ENCODE measurements at regions of chr9 and their contacts with region 1.

Region 1: DNA sequence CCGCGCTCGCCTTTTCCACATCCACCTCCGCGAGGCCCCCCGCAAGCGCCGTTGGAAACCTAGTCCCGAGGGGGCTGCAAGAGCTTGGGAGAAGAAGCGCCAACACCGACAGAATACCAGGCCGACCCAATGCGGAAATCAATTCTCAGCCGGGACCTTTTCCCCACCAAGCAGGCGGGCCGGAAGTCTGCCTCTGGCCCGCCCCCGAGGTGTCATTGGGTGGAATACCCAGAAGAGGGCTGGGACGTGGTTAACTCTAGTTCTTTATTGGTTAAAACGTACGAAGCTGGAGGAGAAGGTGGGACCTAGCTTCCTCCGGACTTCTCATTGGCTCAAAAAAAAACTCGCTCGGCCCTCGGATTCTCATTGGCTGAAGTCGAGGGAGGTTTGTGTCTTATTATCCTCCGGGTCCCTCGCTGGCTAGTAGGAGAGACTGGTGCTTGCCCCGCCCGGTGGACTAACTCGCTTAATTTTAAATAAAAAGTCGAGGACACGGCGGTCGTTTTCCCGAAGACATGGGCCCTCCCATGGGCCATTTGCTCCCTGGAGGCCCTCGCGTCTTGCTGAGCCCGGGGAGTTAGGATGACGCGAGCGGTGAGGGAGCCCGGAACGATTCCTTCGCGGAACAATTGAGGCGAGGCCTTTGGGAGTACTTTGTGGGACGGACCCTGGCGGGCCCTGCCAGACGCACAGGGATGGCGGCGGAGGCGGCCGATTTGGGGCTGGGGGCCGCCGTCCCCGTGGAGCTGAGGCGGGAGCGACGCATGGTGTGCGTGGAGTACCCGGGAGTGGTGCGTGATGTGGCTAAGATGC is at the start of gene GTF3C5:
- DNase-seq: peak; percentile 96
- total RNA-seq, gene GTF3C5: 27.6 TPM

Region 2: DNA sequence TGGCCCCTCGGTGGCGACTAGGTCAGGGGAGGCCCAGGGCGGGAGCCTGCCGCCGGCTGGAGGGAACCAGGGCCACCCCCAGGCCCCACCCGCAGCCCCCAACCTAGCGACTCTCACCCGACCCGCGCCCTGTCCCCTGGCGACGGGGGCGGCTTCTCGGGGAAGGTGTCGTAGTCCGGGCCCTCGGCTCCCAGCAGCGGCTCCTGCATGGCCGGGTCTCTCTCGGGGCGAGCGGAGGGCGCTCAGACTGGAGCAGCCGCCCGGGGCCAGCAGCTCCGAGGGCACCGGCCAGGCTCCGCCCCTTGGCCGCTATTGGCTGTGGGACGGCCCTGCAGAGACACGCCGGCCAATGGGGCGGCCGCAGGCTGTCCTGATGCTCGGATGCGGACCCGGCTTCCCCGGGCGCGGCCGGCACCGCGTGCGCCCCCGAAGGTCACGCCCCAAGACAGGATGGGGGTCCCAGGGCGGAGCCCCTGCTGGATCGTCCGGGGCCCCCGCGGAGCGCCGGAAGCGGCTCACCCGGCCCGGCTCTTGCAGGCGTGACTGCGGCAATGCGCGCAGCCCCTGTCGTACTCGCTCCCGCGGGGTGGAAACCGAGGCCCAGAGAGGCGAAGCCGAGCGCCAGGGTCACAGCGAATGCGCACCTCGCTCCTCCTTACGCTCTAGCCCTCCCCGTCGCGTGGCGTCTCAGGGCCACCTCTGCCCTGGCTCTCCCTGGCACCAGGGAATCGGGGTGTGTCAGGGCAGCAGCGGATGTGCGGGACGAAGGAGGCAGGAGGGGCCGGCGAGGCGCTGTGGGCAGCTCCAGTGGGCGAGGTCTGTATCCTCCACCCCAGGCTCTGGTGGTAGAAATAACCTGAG is 448.6 kb after region 1 on chr9 and contains the start of gene SLC2A6:
- intact Hi-C with region 1: loop called (anchors 10 kb)
- DNase-seq: peak; percentile 90
- total RNA-seq, gene SLC2A6: 3.6 TPM

Measured in cardiac septum (tissue), 1 donor.